Adrenal gland (tissue), 19 donors: ENCODE measurements at regions of chr18 and their contacts with region 1.

Region 1: GRCh38 chr18:59566533-59566971 is 130.7 kb downstream of the CCBE1 start:
- DNase-seq: peak in 5 of 7 donors; percentile 21 to 66 (median 40)
- H3K4me3 ChIP-seq: no peak overlapping the region
- H3K27ac ChIP-seq: peak overlapping the region in 2 of 5 donors; percentile 16 to 34
- H3K4me1 ChIP-seq: peaks cover 27 to 29% of the 10 kb centered on the region in 2 donors
- H3K27me3 ChIP-seq: no peaks in the 10 kb centered on the region
- CTCF ChIP-seq: no peak
- POLR2A ChIP-seq: no peak

Region 2: GRCh38 chr18:59233017-59233410 is 333.5 kb before region 1 on chr18:
- intact Hi-C with region 1: no loop called
- DNase-seq: no peak
- H3K4me3 ChIP-seq: no peak overlapping the region
- H3K27ac ChIP-seq: no peak overlapping the region
- H3K4me1 ChIP-seq: no peaks in the 10 kb centered on the region
- H3K27me3 ChIP-seq: no peaks in the 10 kb centered on the region
- CTCF ChIP-seq: no peak
- POLR2A ChIP-seq: no peak

Region 3: GRCh38 chr18:59612381-59612780 is 45.8 kb after region 1 on chr18:
- intact Hi-C with region 1: loop called in 1 of 2 experiments (anchors 10 kb)
- DNase-seq: peak in 5 of 7 donors; percentile 36 to 78 (median 60)
- H3K4me3 ChIP-seq: no peak overlapping the region
- H3K27ac ChIP-seq: no peak overlapping the region
- H3K4me1 ChIP-seq: peaks cover 2 to 17% of the 10 kb centered on the region in 2 donors
- H3K27me3 ChIP-seq: no peaks in the 10 kb centered on the region
- CTCF ChIP-seq: no peak
- POLR2A ChIP-seq: no peak

Region 4: GRCh38 chr18:59715966-59716369 is 149.4 kb after region 1 on chr18:
- intact Hi-C with region 1: no loop called
- DNase-seq: peak; percentile 37 to 75 (median 63)
- H3K4me3 ChIP-seq: no peak overlapping the region
- H3K27ac ChIP-seq: peak overlapping the region in 3 of 5 donors; percentile 41 to 78 (median 68)
- H3K4me1 ChIP-seq: peaks cover 12 to 17% of the 10 kb centered on the region in 2 donors
- H3K27me3 ChIP-seq: no peaks in the 10 kb centered on the region
- CTCF ChIP-seq: peak in 3 of 6 experiments; percentile 10 to 27 (median 25)
- POLR2A ChIP-seq: no peak

Region 5: DNA sequence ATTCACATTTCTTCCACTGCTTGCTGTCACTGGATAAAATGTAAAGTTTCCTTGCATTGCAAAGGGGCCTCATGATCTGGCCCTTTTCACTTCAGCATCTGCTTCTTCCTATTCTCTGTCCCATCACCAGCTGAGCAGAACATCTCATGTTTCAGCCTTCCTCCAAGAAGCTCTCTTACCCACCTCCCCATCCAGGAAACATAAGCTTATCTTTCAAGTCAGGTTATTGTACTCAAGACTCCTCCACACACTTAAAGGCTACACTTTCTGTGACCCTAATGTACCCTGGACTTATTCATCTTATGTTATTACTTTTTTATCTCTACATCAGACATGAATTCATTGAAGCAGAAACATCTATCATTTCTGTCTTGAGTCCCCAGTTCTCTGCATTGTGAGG is 563.7 kb after region 1 on chr18:
- intact Hi-C with region 1: no loop called
- DNase-seq: no peak
- H3K4me3 ChIP-seq: no peak overlapping the region
- H3K27ac ChIP-seq: no peak overlapping the region
- H3K4me1 ChIP-seq: no peaks in the 10 kb centered on the region
- H3K27me3 ChIP-seq: no peaks in the 10 kb centered on the region
- CTCF ChIP-seq: no peak
- POLR2A ChIP-seq: no peak